Dendritic cell treated with granulocyte-macrophage colony-stimulating factor and Interleukin-4, amounts not matched to agents 40 ng/mL and 50 ng/mL, for 4 days (primary cell): ENCODE measurements at regions of chr7 and their contacts with region 1.

Region 1: DNA sequence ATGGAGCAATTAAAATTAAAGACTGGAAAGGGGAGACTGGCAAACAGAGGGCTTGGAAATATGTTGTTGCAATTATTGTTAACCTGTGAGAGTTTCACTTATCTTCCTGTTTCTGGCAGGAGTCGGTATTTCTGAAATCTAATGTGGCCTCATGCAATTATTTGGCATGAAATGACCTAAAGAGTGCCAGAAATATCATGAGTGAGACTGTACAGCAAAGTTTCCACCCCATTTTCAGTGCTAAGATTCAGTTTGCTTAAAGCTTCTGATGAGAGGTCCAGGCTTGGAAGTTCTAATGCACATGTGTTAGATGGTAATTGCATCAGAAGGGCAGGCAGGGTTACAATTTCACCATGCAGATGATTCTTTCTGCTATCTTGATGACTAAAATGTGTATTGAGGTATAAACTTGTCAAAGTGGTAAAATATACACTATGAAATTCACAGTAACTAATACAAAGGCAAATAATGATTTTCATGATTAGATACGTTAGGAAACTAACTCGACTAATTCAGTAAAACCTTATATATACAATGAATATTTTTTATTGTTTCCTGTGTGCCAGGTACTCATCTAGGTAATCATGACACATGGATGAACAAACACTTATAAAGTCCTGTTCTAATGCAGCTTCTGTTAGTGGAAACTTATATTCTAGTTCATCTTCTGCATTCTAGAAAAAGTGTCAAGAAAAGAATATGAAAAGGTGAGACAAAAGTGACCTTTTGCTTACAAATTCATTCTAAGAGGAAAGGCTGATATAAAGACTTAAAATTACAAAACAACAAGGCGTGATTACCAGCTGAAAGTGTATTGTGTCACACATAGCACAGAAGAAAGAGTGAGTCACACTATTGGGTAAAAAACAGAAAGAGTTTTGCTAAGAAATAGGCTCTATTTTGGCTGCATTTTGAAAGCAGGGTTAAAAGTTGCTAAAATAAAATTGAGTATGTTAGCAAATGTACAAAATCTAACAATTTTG is 533.4 kb upstream of the SEMA3D start:
- H3K4me3 Mint-ChIP-seq: no peak overlapping the region
- H3K27ac Mint-ChIP-seq: no peak overlapping the region
- H3K4me1 Mint-ChIP-seq: peaks cover 6% of the 10 kb centered on the region
- H3K27me3 Mint-ChIP-seq: no peaks in the 10 kb centered on the region

Region 2: GRCh38 chr7:85567983-85568382 is 152.3 kb before region 1 on chr7:
- intact Hi-C with region 1: loop called (anchors 10 kb)
- H3K4me3 Mint-ChIP-seq: no peak overlapping the region
- H3K27ac Mint-ChIP-seq: no peak overlapping the region
- H3K4me1 Mint-ChIP-seq: no peaks in the 10 kb centered on the region
- H3K27me3 Mint-ChIP-seq: no peaks in the 10 kb centered on the region